Activated CD4-positive, alpha-beta T cell treated with anti-CD3 and anti-CD28 coated beads for 36 hours (primary cell): ENCODE measurements at regions of chr17 and their contacts with region 1.

Region 1: GRCh38 chr17:30116661-30117551 is at the start of gene NSRP1:
- DNase-seq: peak; percentile 97
- ATAC-seq: peak; percentile 95
- H3K4me3 Mint-ChIP-seq: peak within 1 kb of the TSS; percentile 90
- H3K27ac Mint-ChIP-seq: peak within 1 kb of the TSS; percentile 98
- H3K4me1 Mint-ChIP-seq: peaks cover 41% of the 10 kb centered on the region
- H3K27me3 Mint-ChIP-seq: no peaks in the 10 kb centered on the region
- total RNA-seq, gene NSRP1: 29.9 to 43.0 TPM

Region 2: GRCh38 chr17:29389982-29390850 is 726.7 kb before region 1 on chr17 and contains the start of gene TAOK1:
- CTCF ChIA-PET with region 1: no interaction called
- POLR2A ChIA-PET with region 1: no interaction called
- intact Hi-C with region 1: loop called in 1 of 2 experiments (anchors 2 kb)
- DNase-seq: peak; percentile 99
- ATAC-seq: peak; percentile 95
- H3K4me3 Mint-ChIP-seq: peak within 1 kb of the TSS; percentile 81
- H3K27ac Mint-ChIP-seq: peak within 1 kb of the TSS; percentile 94
- H3K4me1 Mint-ChIP-seq: peaks cover 36% of the 10 kb centered on the region
- H3K27me3 Mint-ChIP-seq: no peaks in the 10 kb centered on the region
- total RNA-seq, gene TAOK1: 29.9 to 35.1 TPM

Region 3: DNA sequence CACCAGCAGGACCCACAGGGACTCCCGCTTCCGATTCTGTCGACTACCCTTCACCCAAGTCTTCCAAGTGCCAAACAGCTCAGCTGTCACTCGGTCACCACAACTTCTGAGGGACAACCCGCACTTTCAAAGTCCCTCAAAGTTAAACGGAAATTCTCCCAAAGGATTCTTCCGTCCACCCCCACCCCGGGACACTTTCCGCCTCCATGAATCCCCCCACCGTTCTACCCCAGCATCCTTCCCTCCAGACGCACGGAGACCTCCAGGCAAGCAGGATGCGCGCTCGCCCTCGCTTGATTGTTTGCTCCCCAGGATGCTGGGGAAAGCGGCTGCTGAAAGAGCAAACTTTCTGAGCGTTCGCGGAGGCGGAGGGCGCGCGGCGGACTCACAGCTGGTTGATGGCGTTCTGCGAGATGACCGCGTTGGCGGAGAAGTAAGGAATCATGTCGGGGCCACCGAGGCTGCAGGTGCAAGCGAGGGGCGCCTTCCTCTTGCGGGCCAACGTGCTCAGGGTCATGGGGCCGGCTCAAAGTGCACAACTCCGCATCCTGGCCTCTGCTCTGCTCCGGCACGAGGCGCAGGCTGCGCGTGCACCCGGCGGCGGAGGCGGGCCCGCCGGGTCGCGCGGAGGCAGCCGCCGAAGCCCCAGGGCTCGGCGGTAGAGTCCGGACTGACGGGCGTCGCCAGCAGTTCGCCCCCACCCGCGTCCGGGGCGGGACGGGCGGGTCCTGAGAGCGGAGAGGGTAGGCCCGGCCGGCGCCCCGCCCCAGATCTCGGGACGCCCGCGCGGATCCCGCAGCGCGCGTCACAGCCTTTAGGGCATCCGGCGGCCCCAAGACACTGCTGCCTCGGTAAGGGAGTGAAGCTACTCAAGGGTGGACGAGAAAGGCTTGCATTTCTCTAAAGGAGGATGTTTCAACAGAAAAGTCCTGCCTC is 355.9 kb before region 1 on chr17:
- CTCF ChIA-PET with region 1: no interaction called
- POLR2A ChIA-PET with region 1: no interaction called
- intact Hi-C with region 1: loop called in 1 of 2 experiments (anchors 1 kb)
- DNase-seq: peak; percentile 97
- ATAC-seq: peak; percentile 89
- H3K4me3 Mint-ChIP-seq: peak overlapping the region; percentile 97
- H3K27ac Mint-ChIP-seq: peak overlapping the region; percentile 97
- H3K4me1 Mint-ChIP-seq: peaks cover 30% of the 10 kb centered on the region
- H3K27me3 Mint-ChIP-seq: no peaks in the 10 kb centered on the region

Region 4: GRCh38 chr17:30291543-30292285 is 174.8 kb after region 1 on chr17 and contains the start of gene BLMH:
- CTCF ChIA-PET with region 1: no interaction called
- POLR2A ChIA-PET with region 1: no interaction called
- intact Hi-C with region 1: loop called in 1 of 2 experiments (anchors 1 kb)
- DNase-seq: peak; percentile 90
- ATAC-seq: peak; percentile 82
- H3K4me3 Mint-ChIP-seq: peak within 1 kb of the TSS; percentile 91
- H3K27ac Mint-ChIP-seq: peak within 1 kb of the TSS; percentile 94
- H3K4me1 Mint-ChIP-seq: peaks cover 13% of the 10 kb centered on the region
- H3K27me3 Mint-ChIP-seq: no peaks in the 10 kb centered on the region
- total RNA-seq, gene BLMH: 54.3 to 74.5 TPM

Region 5: GRCh38 chr17:30701498-30701989 is 584.6 kb after region 1 on chr17:
- CTCF ChIA-PET with region 1: no interaction called
- POLR2A ChIA-PET with region 1: no interaction called
- intact Hi-C with region 1: loop called in 1 of 2 experiments (anchors 5 kb)
- DNase-seq: no peak
- ATAC-seq: no peak
- H3K4me3 Mint-ChIP-seq: no peak overlapping the region
- H3K27ac Mint-ChIP-seq: no peak overlapping the region
- H3K4me1 Mint-ChIP-seq: peaks cover 8% of the 10 kb centered on the region
- H3K27me3 Mint-ChIP-seq: peaks cover 22% of the 10 kb centered on the region